ENCODE measurements at regions of chr12 and their contacts with region 1.

Region 1: DNA sequence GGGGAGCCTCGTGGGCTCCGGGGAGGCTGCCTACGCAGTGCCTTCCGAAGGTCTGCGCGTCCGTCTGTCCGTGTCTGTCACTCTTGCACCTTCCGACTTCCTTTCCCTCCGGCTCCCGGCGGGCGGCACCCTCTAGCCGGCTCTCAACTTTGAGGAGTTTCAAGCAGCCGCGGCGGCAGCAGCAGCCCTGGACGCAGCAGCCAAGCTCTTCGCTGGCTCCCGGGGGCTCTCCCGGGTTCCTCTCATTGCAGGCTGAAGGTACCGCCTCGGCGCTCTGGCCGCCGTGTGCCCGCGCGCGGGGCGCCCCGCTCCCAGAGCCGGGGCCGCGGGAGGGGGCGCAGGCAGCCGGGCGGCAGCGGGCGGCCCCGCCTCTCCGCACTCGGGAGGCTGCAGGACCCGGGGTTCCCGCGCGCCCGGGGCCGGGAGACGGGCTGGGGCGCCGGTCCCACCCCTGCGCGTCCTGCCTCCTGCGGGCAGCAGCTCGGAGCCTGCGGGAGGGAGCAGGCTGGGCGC is at the starts of genes AMIGO2 and PCED1B:
- DNase-seq: peak; percentile 33 to 86
- H3K4me3 ChIP-seq: peak within 1 kb of the TSS; percentile 78 to 81
- H3K27ac ChIP-seq: peak within 1 kb of the TSS; percentile 96 to 99
- H3K4me1 ChIP-seq: peaks cover 0 to 21% of the 10 kb centered on the region in 2 donors
- H3K27me3 ChIP-seq: no peaks in the 10 kb centered on the region
- CTCF ChIP-seq: peak; percentile 35 to 42 (median 37)
- total RNA-seq, gene AMIGO2: 22.7 TPM
- total RNA-seq, gene PCED1B: 1.5 TPM

Region 2: DNA sequence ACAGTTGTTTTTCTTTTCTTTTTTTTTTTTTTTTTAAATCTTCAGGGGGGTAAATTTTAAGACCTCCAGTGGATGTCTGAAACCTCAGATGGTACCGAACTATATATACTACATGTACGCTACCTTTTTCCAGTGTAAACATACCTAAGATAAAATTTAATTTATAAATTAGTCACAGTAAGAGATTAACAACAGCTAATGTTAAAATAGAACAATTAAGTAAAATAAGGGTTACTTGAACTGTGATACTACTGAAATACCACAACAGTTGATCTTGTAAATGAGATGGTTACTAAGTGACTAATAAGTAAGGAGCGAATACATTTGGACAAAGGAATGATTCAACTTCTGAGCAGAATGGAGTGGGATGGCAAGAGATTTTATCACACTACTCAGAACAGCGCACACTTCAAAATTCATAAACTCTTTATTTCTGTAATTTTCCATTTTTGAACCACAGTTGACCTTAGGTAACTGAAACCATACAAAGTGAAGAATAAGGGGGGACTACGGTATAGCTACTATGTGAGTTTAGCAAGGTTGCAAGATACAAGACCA is 80.6 kb before region 1 on chr12:
- intact Hi-C with region 1: no loop called
- DNase-seq: no peak
- H3K4me3 ChIP-seq: no peak overlapping the region
- H3K27ac ChIP-seq: no peak overlapping the region
- H3K4me1 ChIP-seq: no peaks in the 10 kb centered on the region
- H3K27me3 ChIP-seq: no peaks in the 10 kb centered on the region
- CTCF ChIP-seq: no peak

Region 3: GRCh38 chr12:47038270-47038748 is 41.2 kb before region 1 on chr12:
- intact Hi-C with region 1: loop called (anchors 2 kb)
- DNase-seq: no peak
- H3K4me3 ChIP-seq: no peak overlapping the region
- H3K27ac ChIP-seq: no peak overlapping the region
- H3K4me1 ChIP-seq: peaks cover 5% of the 10 kb centered on the region in 2 donors
- H3K27me3 ChIP-seq: no peaks in the 10 kb centered on the region
- CTCF ChIP-seq: no peak

Region 4: GRCh38 chr12:47133981-47134380 is 54.5 kb after region 1 on chr12:
- intact Hi-C with region 1: no loop called
- DNase-seq: no peak
- H3K4me3 ChIP-seq: no peak overlapping the region
- H3K27ac ChIP-seq: no peak overlapping the region
- H3K4me1 ChIP-seq: peaks cover 0 to 8% of the 10 kb centered on the region in 2 donors
- H3K27me3 ChIP-seq: no peaks in the 10 kb centered on the region
- CTCF ChIP-seq: no peak

Region 5: DNA sequence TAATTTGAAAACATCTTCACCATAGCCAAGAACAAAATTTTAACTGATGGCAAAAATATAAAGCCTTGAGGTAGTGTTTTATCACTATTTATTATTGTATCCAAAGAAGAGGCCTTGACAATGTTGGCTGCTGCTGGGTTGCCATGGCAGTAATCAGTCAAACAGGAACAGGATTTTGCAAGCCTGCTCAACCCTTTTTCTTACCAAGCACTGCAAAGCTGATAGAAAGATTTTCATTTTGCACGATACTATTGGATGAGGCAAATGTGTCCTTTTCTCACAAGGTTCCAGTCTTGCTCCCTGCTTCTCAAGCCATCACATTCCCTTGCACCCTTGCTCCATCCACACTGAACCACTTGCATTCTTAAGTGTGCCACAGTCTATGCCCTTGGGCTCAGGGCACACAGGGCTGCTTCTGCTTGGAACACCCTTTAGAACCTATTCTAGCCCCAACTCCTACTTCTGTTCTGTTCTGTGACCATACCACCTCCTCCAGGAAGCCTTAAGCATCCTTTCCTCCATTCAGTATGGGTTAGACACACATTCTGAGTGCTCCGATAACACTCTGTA is 76.7 kb after region 1 on chr12:
- intact Hi-C with region 1: loop called (anchors 5 kb)
- DNase-seq: no peak
- H3K4me3 ChIP-seq: no peak overlapping the region
- H3K27ac ChIP-seq: peak overlapping the region; percentile 54 to 57
- H3K4me1 ChIP-seq: peaks cover 0 to 3% of the 10 kb centered on the region in 2 donors
- H3K27me3 ChIP-seq: no peaks in the 10 kb centered on the region
- CTCF ChIP-seq: no peak

Region 6: GRCh38 chr12:47377414-47378221 is 298.1 kb after region 1 on chr12:
- intact Hi-C with region 1: loop called (anchors 5 kb)
- DNase-seq: peak; percentile 95 to 99
- H3K4me3 ChIP-seq: peak overlapping the region in 1 of 2 donors; percentile 23
- H3K27ac ChIP-seq: peak overlapping the region; percentile 85 to 91
- H3K4me1 ChIP-seq: peaks cover 0 to 13% of the 10 kb centered on the region in 2 donors
- H3K27me3 ChIP-seq: no peaks in the 10 kb centered on the region
- CTCF ChIP-seq: no peak

Region 7: GRCh38 chr12:47812797-47813510 is 733.4 kb after region 1 on chr12:
- intact Hi-C with region 1: loop called (anchors 10 kb)
- DNase-seq: peak; percentile 86 to 98
- H3K4me3 ChIP-seq: peak overlapping the region; percentile 28 to 61
- H3K27ac ChIP-seq: peak overlapping the region; percentile 97
- H3K4me1 ChIP-seq: peaks cover 56 to 87% of the 10 kb centered on the region in 2 donors
- H3K27me3 ChIP-seq: no peaks in the 10 kb centered on the region
- CTCF ChIP-seq: peak in 1 of 3 experiments; percentile 6